Posterior cingulate gyrus (tissue), 11 donors: ENCODE measurements at regions of chr9 and their contacts with region 1.

Region 1: DNA sequence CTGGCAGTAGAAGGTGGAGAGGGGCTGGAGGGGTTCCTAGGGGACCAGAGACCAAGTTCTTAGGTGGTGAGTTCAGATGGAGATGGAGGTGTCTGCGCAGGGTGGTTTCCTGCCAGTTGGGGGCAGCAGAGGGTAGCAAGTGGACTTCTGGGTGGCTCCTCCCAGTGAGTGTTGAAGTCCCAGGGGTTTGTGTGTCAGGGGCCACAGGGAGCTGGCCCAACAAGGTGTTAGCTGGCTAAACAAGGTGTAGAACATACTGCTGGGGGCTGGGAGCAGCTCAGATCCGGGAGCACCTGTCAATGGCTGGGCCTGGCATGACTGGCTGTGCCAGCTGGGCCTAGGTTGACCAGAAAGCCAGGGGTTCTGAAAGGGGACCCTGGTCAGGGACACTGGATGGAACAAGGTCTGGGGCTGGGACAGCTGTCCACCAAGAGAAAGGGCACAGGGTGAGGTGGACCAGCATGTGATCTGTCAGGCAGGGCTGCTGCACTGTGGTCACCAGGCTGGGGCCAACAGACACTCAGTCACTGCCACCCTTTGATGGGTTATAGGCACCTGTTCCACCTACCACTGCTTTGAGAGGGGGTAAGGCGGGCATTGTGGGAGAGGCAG is 35.6 kb downstream of the DAB2IP start:
- DNase-seq: peak; percentile 61 to 96 (median 83)

Region 2: GRCh38 chr9:121222524-121223171 is 464.4 kb before region 1 on chr9:
- intact Hi-C with region 1: no loop called
- DNase-seq: peak in 1 of 10 donors; percentile 77

Region 3: GRCh38 chr9:121545875-121546423 is 141.1 kb before region 1 on chr9:
- intact Hi-C with region 1: loop called (anchors 5 kb)
- DNase-seq: peak; percentile 79 to 99 (median 94)

Region 4: GRCh38 chr9:121640076-121640475 is 47.0 kb before region 1 on chr9:
- intact Hi-C with region 1: loop called (anchors 5 kb)
- DNase-seq: peak in 8 of 10 donors; percentile 40 to 95 (median 68)